GM10248 (cell line): ENCODE measurements at regions of chr11 and their contacts with region 1.

Region 1: DNA sequence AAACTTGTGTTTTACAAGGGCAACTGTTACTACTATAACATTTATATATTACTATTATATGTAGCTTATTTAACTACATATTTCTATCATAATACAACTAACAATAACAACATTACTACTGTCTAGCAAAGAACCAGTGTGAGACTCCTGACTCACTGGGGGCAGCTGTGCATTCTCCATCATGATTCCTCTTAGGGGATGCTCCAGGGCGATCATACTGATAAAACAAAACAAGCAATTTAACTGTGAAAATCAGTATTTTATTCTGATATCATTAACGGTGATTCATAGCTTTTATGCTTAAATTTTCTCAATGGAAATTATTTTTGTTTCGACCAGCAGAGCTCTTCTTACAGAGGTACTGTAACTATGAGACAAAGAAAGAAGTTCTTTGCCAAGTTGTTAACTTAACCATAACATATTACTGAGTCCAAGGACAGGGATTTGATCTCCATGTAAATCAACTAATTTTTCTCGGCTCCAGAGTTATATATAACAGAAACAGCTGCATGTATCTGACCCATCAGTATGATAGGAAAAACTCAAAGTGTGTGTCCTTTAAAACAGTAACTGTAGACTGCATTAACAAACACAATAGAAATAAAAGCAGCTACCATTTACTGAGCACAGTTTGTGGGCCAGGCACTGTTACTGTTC is 24.8 kb upstream of the FNBP4 start:
- DNase-seq: no peak
- CTCF ChIP-seq: no peak

Region 2: DNA sequence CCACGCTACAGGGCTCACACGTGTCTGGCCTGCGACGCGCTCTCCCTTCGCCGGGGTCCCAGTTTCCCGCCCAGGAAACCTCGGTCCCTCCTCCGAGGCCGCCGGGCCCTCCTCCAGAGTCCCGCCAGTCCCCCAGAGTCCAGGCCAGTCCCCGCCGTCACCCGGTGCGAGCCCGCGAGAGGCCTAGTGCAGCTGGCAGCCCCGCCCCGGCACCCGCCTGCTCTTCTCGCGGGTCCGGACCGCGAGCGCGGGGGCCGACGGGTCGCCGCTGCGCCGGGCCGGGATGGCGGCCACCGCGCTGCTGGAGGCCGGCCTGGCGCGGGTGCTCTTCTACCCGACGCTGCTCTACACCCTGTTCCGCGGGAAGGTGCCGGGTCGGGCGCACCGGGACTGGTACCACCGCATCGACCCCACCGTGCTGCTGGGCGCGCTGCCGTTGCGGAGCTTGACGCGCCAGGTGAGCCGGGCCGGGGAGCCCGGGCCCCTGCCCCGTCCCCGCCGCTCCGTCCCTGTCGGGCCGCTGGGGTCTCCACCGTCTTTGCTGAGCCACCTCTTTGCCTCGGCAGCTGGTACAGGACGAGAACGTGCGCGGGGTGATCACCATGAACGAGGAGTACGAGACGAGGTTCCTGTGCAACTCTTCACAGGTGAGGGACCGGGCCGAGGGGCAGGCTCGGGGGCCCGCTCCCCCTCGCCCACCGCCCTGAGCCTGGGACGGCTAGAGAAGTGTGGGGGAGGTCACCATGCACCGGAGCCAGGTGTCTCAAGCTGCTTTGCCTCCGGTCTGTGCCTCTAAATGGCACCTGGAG is 226.4 kb before region 1 on chr11 and contains the start of gene PTPMT1:
- CTCF ChIA-PET with region 1: no interaction called
- POLR2A ChIA-PET with region 1: no interaction called
- DNase-seq: peak; percentile 88
- CTCF ChIP-seq: no peak

Region 3: GRCh38 chr11:47778878-47779483 is 12.9 kb before region 1 on chr11:
- CTCF ChIA-PET with region 1: interaction called, 14 read pairs
- POLR2A ChIA-PET with region 1: no interaction called
- DNase-seq: no peak
- CTCF ChIP-seq: no peak